ENCODE measurements at regions of chr21 and their contacts with region 1.

Region 1: DNA sequence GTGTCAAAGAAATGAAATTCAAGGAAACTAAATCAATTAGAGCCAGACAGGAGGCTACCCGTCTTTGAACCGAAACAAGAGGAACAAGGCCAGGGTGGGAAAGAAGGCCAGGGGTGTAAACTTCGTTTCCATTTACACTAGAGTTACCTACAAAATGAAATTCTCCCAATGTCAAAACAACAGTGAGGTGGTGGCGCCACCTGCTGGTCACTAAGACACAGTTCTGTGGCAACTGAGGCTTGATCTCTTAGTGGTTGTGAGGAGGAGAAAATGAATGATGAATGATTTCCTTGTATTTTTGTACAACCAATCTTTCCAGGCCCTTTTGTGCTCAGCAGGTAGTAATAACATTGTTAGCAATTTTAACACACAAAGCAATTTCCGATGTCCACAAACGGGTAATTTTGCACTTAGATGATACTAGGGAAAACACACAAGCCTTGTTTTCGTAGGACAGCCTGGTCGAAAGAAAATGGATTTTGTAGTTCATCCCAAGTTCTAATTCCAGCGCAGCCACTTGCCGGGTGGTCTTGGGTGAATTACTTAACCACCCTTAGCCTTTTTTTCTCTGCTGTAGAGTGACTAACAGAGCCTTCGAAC is 54.8 kb upstream of the SOD1 start:
- DNase-seq: no peak
- H3K4me3 ChIP-seq: no peak overlapping the region
- H3K27ac ChIP-seq: no peak overlapping the region
- H3K4me1 ChIP-seq: no peaks in the 10 kb centered on the region
- H3K27me3 ChIP-seq: no peaks in the 10 kb centered on the region
- CTCF ChIP-seq: peak; percentile 32 to 82 (median 69)

Region 2: GRCh38 chr21:31107871-31108270 is 496.8 kb before region 1 on chr21:
- intact Hi-C with region 1: loop called (anchors 10 kb)
- DNase-seq: no peak
- H3K4me3 ChIP-seq: no peak overlapping the region
- H3K27ac ChIP-seq: no peak overlapping the region
- H3K4me1 ChIP-seq: no peaks in the 10 kb centered on the region
- H3K27me3 ChIP-seq: no peaks in the 10 kb centered on the region
- CTCF ChIP-seq: no peak

Region 3: DNA sequence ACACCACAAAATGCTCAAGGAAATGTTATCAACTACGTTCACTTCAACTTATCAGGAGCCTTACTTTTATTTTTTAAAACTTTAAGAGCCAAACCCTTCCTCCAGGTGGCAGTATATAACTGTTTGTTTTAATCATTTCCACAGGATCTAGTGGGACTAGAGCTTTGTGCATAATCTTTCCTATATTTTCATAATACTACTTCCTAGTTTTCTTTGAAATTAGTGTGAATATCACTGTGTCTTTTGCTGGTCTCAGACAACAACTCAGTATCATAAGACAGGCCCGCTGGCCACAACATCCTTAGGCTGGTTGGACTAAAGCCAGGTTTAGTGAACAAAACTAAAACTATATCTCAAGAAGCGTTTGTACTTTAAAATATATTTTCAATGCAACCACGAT is 406.1 kb before region 1 on chr21:
- intact Hi-C with region 1: loop called (anchors 2 kb)
- DNase-seq: no peak
- H3K4me3 ChIP-seq: no peak overlapping the region
- H3K27ac ChIP-seq: no peak overlapping the region
- H3K4me1 ChIP-seq: no peaks in the 10 kb centered on the region
- H3K27me3 ChIP-seq: no peaks in the 10 kb centered on the region
- CTCF ChIP-seq: peak; percentile 32 to 52 (median 49)

Region 4: DNA sequence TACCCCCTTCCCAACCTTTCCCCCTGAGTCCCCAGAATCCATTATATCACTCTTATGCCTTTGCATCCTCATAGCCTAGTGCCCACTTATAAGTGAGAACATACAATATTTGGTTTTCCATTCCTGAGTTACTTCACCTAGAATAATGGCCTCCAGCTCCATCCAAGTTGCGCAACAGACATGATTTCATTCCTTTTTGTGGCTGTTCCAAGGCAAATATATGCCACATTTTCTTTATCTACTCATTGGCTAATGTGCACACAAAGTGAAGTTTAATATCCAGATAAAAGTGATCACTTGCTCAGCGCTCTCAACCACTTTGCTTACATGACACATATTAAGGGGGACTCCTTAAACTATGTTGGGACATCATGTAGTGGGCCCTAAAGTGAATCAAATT is 188.2 kb before region 1 on chr21:
- intact Hi-C with region 1: no loop called
- DNase-seq: no peak
- H3K4me3 ChIP-seq: no peak overlapping the region
- H3K27ac ChIP-seq: no peak overlapping the region
- H3K4me1 ChIP-seq: no peaks in the 10 kb centered on the region
- H3K27me3 ChIP-seq: no peaks in the 10 kb centered on the region
- CTCF ChIP-seq: no peak